Activated T-helper 2 cell treated with anti-CD3 and anti-CD28 coated beads, Interferon-gamma antibody, Interleukin-2, Interleukin-4, amounts not matched to agents 10 μg/mL and 5 μg/mL and 100 μg/mL, durations not matched to agents 14 hours and 24 hours and 36 hours (primary cell): ENCODE measurements at regions of chr11 and their contacts with region 1.

Region 1: DNA sequence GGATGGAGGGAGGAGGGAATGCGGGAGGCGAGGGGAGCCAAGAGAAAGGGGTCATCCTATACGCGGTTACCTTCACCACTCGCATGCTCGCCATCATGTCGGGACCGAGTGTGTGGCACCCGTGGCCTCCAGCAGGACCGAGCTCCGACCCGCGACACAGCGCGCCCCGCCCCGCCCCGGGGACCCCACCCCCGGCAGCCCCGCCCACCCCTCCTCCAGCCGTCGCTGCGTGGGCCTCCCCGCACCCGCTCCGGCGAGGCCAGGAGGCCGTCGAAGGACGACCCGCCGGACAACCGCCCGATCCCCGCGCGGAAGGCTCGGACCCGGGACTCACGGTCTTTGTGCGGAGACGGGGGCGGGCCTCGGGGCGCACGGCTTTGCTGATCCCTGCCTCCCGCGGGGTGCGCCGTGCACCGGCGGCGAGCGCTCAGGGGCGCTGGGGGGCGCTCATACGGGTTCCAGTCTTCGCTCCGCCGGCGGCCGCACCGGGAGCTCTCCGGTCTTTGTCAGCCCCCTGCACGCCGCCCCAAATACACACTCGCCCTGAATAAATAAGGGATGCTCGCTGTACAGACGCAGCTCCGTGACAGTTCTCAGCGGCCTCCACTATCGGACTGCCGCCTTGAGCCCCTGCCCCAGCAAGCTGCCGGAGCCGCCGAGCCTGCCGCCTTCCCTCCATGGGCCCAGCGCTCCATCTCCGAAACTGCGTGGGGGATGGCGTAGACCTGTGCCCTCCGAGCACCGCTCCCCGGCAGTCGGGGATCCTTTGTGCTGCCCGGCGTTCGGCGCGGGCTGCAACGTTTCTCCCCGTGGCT is at the start of gene UBE2L6:
- DNase-seq: peak; percentile 56
- H3K4me3 Mint-ChIP-seq: peak within 1 kb of the TSS; percentile 99
- H3K27ac Mint-ChIP-seq: peak within 1 kb of the TSS; percentile 97
- H3K4me1 Mint-ChIP-seq: peaks cover 26% of the 10 kb centered on the region
- H3K27me3 Mint-ChIP-seq: no peaks in the 10 kb centered on the region
- total RNA-seq, gene UBE2L6: 135 and 137 TPM in 2 replicates

Region 2: GRCh38 chr11:57480409-57481137 is 87.1 kb before region 1 on chr11:
- intact Hi-C with region 1: loop called (anchors 5 kb)
- DNase-seq: peak; percentile 61
- H3K4me3 Mint-ChIP-seq: no peak overlapping the region
- H3K27ac Mint-ChIP-seq: no peak overlapping the region
- H3K4me1 Mint-ChIP-seq: peaks cover 12% of the 10 kb centered on the region
- H3K27me3 Mint-ChIP-seq: peaks cover 53% of the 10 kb centered on the region

Region 3: DNA sequence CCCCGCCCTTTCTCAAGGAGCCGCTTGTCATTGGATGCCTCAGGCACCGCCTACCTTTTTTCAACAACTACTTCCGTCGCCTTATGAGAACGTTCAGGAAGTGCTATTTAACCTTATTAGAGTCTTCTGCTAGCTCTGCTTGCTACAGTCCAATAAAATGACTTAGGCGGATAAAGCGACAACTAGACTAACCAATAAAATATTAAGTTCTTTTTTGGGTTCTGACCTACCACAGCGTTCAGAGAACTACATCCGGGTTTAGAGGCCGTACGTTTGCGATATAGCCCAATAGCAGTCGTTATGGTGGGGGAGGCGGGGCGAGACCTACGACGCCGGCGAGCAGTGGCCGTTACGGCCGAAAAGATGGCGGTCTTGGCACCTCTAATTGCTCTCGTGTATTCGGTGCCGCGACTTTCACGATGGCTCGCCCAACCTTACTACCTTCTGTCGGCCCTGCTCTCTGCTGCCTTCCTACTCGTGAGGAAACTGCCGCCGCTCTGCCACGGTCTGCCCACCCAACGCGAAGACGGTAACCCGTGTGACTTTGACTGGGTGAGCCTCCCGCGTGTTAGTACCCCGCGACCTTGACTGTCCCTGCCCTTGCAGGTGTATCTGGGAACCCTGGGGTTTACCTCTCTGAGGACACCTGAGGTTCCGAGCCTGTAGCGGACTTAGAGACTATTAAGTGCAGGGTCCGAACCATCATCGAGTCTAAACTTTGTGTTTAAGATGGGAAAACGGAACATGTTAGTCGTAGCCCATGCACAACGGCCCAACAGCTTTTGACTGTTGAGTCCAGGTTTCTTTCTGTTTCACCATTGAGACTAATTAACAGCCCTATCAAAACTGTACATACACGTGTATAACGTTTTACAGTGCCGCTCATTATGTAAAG is 144.8 kb after region 1 on chr11 and contains the start of gene TMX2:
- intact Hi-C with region 1: loop called (anchors 1 kb)
- DNase-seq: peak; percentile 90
- H3K4me3 Mint-ChIP-seq: peak within 1 kb of the TSS; percentile 99
- H3K27ac Mint-ChIP-seq: peak within 1 kb of the TSS; percentile 94
- H3K4me1 Mint-ChIP-seq: peaks cover 35% of the 10 kb centered on the region
- H3K27me3 Mint-ChIP-seq: no peaks in the 10 kb centered on the region
- total RNA-seq, gene TMX2: 74.6 and 80.0 TPM in 2 replicates

Region 4: GRCh38 chr11:57792060-57792541 is 224.4 kb after region 1 on chr11:
- intact Hi-C with region 1: loop called (anchors 2 kb)
- DNase-seq: peak; percentile 85
- H3K4me3 Mint-ChIP-seq: peak overlapping the region; percentile 45
- H3K27ac Mint-ChIP-seq: peak overlapping the region; percentile 68
- H3K4me1 Mint-ChIP-seq: peaks cover 40% of the 10 kb centered on the region
- H3K27me3 Mint-ChIP-seq: no peaks in the 10 kb centered on the region

Region 5: DNA sequence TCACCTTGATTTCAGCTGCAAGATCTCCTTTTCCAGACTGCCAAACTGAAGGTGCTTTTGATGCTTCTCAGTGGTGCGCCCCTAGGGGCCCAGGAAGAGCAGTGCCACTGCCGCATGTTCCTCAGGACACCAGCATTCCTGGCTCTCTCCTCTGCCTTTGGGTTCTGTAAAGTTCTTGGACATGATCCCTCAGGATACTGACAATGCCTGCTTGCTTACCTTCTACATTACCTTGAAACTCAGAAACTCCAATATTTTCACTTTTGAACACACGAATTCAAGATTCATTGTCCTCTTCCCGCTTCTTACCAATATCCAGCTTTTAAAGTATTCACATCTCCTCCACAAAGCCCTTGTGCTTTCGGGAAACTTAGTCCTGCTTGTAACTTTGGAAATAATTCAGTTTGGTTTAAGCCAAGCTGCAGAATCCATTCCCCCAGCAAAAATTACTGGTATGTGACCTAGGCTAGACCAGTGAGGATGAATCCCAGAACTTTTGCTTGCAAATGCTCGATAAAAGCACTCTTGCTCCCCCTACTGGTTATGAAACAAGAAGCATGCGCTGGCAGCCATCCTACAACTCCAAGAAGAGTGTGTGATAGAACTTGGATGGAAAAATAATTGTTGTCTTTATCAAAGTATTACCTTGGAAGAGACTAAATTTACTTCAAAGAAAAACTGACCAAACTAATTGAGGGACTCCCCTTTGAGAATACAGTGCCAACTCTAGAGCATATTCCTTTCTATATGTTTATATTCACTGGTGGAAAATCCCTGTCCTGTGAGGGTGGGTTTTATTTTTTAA is 956.7 kb after region 1 on chr11:
- intact Hi-C with region 1: loop called (anchors 1 kb)
- DNase-seq: peak; percentile 29
- H3K4me3 Mint-ChIP-seq: peak overlapping the region; percentile 75
- H3K27ac Mint-ChIP-seq: peak overlapping the region; percentile 88
- H3K4me1 Mint-ChIP-seq: peaks cover 48% of the 10 kb centered on the region
- H3K27me3 Mint-ChIP-seq: no peaks in the 10 kb centered on the region